CD8-positive, alpha-beta T cell (primary cell): ENCODE measurements at regions of chr4 and their contacts with region 1.

Region 1: GRCh38 chr4:148495471-148495870 is 53.3 kb upstream of the NR3C2 start:
- DNase-seq: no peak
- ATAC-seq: no peak
- H3K4me3 ChIP-seq: no peak overlapping the region
- H3K4me3 Mint-ChIP-seq: no peak overlapping the region
- H3K27ac ChIP-seq: no peak overlapping the region
- H3K27ac Mint-ChIP-seq: no peak overlapping the region
- H3K4me1 ChIP-seq: no peaks in the 10 kb centered on the region
- H3K4me1 Mint-ChIP-seq: no peaks in the 10 kb centered on the region
- H3K27me3 ChIP-seq: no peaks in the 10 kb centered on the region
- H3K27me3 Mint-ChIP-seq: no peaks in the 10 kb centered on the region
- CTCF ChIP-seq: no peak

Region 2: GRCh38 chr4:148434075-148434773 is 61.2 kb before region 1 on chr4:
- CTCF ChIA-PET with region 1: no interaction called
- POLR2A ChIA-PET with region 1: no interaction called
- intact Hi-C with region 1: loop called in 1 of 2 experiments (anchors 2 kb)
- DNase-seq: no peak
- ATAC-seq: no peak
- H3K4me3 ChIP-seq: no peak overlapping the region
- H3K4me3 Mint-ChIP-seq: peak overlapping the region; percentile 68
- H3K27ac ChIP-seq: no peak overlapping the region
- H3K27ac Mint-ChIP-seq: no peak overlapping the region
- H3K4me1 ChIP-seq: peaks cover 58% of the 10 kb centered on the region
- H3K4me1 Mint-ChIP-seq: peaks cover 85% of the 10 kb centered on the region
- H3K27me3 ChIP-seq: no peaks in the 10 kb centered on the region
- H3K27me3 Mint-ChIP-seq: no peaks in the 10 kb centered on the region
- CTCF ChIP-seq: no peak

Region 3: GRCh38 chr4:148515248-148515647 is 19.8 kb after region 1 on chr4:
- CTCF ChIA-PET with region 1: no interaction called
- POLR2A ChIA-PET with region 1: no interaction called
- intact Hi-C with region 1: no loop called
- DNase-seq: no peak
- ATAC-seq: no peak
- H3K4me3 ChIP-seq: no peak overlapping the region
- H3K4me3 Mint-ChIP-seq: no peak overlapping the region
- H3K27ac ChIP-seq: no peak overlapping the region
- H3K27ac Mint-ChIP-seq: no peak overlapping the region
- H3K4me1 ChIP-seq: no peaks in the 10 kb centered on the region
- H3K4me1 Mint-ChIP-seq: no peaks in the 10 kb centered on the region
- H3K27me3 ChIP-seq: no peaks in the 10 kb centered on the region
- H3K27me3 Mint-ChIP-seq: peaks cover 1% of the 10 kb centered on the region
- CTCF ChIP-seq: no peak

Region 4: GRCh38 chr4:148693913-148694649 is 198.6 kb after region 1 on chr4:
- CTCF ChIA-PET with region 1: no interaction called
- POLR2A ChIA-PET with region 1: no interaction called
- intact Hi-C with region 1: no loop called
- DNase-seq: no peak
- ATAC-seq: no peak
- H3K4me3 ChIP-seq: no peak overlapping the region
- H3K4me3 Mint-ChIP-seq: no peak overlapping the region
- H3K27ac ChIP-seq: no peak overlapping the region
- H3K27ac Mint-ChIP-seq: no peak overlapping the region
- H3K4me1 ChIP-seq: no peaks in the 10 kb centered on the region
- H3K4me1 Mint-ChIP-seq: no peaks in the 10 kb centered on the region
- H3K27me3 ChIP-seq: no peaks in the 10 kb centered on the region
- H3K27me3 Mint-ChIP-seq: no peaks in the 10 kb centered on the region
- CTCF ChIP-seq: no peak